ENCODE measurements at regions of chr18 and their contacts with region 1.

Region 1: DNA sequence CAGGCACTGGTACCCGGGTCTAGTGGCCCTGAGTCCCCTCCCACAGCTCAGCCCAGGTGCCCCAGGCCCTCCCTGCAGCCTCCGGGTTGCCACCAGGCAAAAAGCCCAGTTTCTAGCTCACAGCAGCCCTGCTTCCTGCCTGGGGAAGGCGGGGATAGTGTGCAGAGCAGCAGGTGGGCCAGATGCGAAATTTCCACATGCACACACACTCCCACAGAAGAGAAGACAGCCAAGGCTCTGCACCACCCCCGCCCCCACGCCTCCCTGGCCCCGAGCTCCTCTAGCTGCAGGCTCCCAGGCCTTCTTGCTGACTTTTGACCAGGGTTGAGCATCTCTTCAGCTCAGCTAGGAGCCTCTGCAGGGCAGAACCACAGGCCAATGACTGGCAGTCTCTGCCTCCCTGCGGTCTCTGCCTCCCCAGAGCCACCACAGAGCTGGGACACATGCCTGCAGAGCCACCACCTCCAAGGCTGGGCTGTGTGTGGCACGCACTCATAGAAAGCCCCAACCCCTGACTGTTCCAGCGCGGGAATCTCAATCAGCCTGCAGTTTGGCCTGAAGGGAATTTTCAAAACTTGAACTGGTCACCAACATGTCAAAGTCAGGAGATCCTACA is 7.2 kb downstream of the SLC66A2 start:
- DNase-seq: peak; percentile 76 to 91 (median 88)
- ATAC-seq: peak; percentile 82
- H3K4me3 ChIP-seq: no peak overlapping the region
- H3K27ac ChIP-seq: peak overlapping the region; percentile 37 to 57 (median 50)
- H3K4me1 ChIP-seq: peaks cover 66% of the 10 kb centered on the region
- H3K27me3 ChIP-seq: no peaks in the 10 kb centered on the region
- CTCF ChIP-seq: peak in 1 of 7 experiments; percentile 11
- POLR2A ChIP-seq: no peak

Region 2: DNA sequence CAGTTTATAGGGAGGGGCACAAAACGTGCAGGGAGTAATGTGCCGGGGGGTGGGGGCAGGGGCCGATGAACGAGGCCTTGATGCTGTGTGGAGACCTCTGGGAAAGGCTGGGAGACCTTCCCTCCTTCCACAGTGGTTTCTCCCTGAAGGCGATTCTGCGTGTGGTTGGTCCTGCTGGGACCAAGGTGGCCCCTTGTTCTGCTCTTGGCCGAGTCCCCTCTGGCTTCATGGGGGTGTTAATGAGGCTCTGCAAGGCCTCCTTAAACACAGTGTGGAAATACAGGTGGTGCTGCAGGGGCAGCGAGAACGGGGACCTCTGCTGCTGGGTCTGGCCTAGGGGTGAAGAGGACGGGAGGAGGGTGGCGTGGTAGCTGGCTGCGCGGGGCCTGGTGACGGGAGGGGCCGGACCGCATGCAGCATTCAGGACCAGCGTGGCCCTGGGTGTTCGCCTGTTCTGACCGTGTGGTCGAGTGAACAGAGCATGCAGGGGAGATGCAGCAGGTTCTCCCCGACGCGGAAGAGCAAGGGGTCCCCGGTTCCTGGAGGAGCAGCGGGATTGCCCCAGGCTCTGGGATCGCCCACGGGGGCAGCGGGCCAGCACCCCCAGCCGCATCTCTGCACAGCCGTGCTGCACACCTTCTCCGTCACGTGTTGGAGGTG is 188.6 kb before region 1 on chr18:
- intact Hi-C with region 1: no loop called
- DNase-seq: peak in 1 of 4 donors; percentile 5
- ATAC-seq: no peak
- H3K4me3 ChIP-seq: no peak overlapping the region
- H3K27ac ChIP-seq: no peak overlapping the region
- H3K4me1 ChIP-seq: no peaks in the 10 kb centered on the region
- H3K27me3 ChIP-seq: no peaks in the 10 kb centered on the region
- CTCF ChIP-seq: no peak
- POLR2A ChIP-seq: no peak

Region 3: GRCh38 chr18:80023173-80023572 is 78.9 kb after region 1 on chr18:
- intact Hi-C with region 1: loop called (anchors 10 kb)
- DNase-seq: no peak
- ATAC-seq: no peak
- H3K4me3 ChIP-seq: no peak overlapping the region
- H3K27ac ChIP-seq: no peak overlapping the region
- H3K4me1 ChIP-seq: no peaks in the 10 kb centered on the region
- H3K27me3 ChIP-seq: no peaks in the 10 kb centered on the region
- CTCF ChIP-seq: no peak
- POLR2A ChIP-seq: no peak